Transverse colon (tissue), 4 donors: ENCODE measurements at regions of chr19 and their contacts with region 1.

Region 1: GRCh38 chr19:49817964-49818648 is at the start of gene MED25:
- DNase-seq: peak; percentile 87
- H3K4me3 ChIP-seq: peak within 1 kb of the TSS; percentile 62 to 94 (median 78)
- H3K27ac ChIP-seq: peak within 1 kb of the TSS; percentile 85 to 97 (median 93)
- H3K4me1 ChIP-seq: peaks cover 12 to 30% (median 14%) of the 10 kb centered on the region in 4 donors
- H3K27me3 ChIP-seq: no peaks in the 10 kb centered on the region
- CTCF ChIP-seq: peak; percentile 24 to 85 (median 54)
- EP300 ChIP-seq: no peak
- POLR2A ChIP-seq: peak; percentile 78
- total RNA-seq, gene MED25: 26.9 to 46.6 (median 38.7) TPM

Region 2: DNA sequence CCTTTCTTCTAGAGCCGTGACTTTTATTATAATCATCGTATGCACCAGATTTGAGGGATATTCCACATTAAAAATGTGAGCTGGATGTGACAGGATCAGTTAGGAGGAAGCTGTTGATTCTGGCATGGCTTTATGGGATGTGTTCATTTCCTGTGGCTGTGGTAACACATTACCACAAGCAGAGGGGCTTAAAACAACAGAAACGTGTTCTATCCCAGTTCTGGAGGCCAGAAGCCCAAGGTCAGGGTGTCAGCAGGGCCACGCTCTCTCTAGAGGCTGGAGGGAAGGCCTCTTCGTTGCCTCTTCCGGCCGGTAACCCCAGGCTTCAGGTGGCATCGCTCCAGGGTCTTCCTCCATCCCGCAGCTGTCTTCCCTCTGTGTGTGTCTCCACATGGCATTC is 14.4 kb after region 1 on chr19:
- in situ Hi-C with region 1: no loop called
- intact Hi-C with region 1: no loop called
- DNase-seq: no peak
- H3K4me3 ChIP-seq: no peak overlapping the region
- H3K27ac ChIP-seq: no peak overlapping the region
- H3K4me1 ChIP-seq: no peaks in the 10 kb centered on the region
- H3K27me3 ChIP-seq: no peaks in the 10 kb centered on the region
- CTCF ChIP-seq: no peak
- EP300 ChIP-seq: no peak
- POLR2A ChIP-seq: no peak

Region 3: DNA sequence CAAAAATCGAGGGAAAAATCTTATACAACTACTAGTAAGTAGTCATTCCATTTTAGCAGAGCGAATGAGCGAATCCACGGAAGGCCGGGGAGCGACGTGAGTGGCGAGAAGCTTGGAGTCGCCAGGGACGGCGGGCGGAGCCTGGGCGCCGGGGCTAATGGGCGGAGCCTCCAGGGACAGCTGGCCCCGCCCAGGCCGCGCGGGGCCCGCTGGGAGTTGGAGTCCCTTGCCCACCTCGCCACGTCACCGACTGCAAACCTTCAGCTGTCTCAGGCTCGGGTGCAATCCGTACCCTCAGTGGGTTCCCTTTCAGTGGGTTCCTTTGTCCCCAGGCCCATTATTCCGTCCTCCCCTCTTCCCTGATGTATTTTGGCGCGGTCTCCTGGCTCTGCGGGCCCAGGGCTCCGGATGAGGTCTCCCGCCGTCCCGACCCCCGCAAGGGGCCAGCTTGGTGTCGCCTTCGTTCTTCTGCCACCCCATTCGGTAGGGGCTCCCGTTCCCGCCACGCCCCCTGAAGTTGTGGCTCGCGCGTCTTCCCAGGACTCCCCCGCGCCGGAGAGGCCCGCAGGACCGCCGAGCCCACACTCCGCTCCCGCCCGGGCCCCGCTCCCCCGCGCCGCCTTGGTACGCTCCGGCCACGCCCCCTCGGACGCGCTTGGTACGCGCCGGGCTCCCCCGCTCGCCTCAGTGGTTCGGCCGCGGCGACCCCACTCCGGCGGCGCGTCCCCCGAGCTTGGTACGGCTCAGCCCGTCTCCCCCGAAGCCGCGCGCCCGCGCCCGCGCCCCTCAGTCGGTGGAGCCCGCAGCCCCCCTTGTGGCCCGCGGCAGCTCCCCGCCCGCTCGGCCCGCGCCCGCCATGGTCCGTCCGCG is 32.6 kb after region 1 on chr19 and contains the start of gene PTOV1:
- in situ Hi-C with region 1: no loop called
- intact Hi-C with region 1: loop called (anchors 5 kb)
- DNase-seq: peak; percentile 94
- H3K4me3 ChIP-seq: peak within 1 kb of the TSS; percentile 62 to 98 (median 87)
- H3K27ac ChIP-seq: peak within 1 kb of the TSS; percentile 97 to 100 (median 99)
- H3K4me1 ChIP-seq: peaks cover 15 to 30% (median 22%) of the 10 kb centered on the region in 4 donors
- H3K27me3 ChIP-seq: no peaks in the 10 kb centered on the region
- CTCF ChIP-seq: no peak
- EP300 ChIP-seq: no peak
- POLR2A ChIP-seq: peak; percentile 82
- total RNA-seq, gene PTOV1: 62.3 to 203 (median 66.8) TPM

Region 4: GRCh38 chr19:49869441-49870176 is 51.5 kb after region 1 on chr19:
- in situ Hi-C with region 1: loop called in 1 of 4 experiments (anchors 10 kb)
- intact Hi-C with region 1: no loop called
- DNase-seq: peak; percentile 97
- H3K4me3 ChIP-seq: peak overlapping the region; percentile 33 to 62 (median 53)
- H3K27ac ChIP-seq: peak overlapping the region; percentile 90 to 96 (median 94)
- H3K4me1 ChIP-seq: peaks cover 25 to 50% (median 43%) of the 10 kb centered on the region in 4 donors
- H3K27me3 ChIP-seq: no peaks in the 10 kb centered on the region
- CTCF ChIP-seq: peak in 1 of 5 experiments; percentile 45
- EP300 ChIP-seq: no peak
- POLR2A ChIP-seq: peak; percentile 79

Region 5: GRCh38 chr19:49954933-49955332 is 136.8 kb after region 1 on chr19:
- in situ Hi-C with region 1: no loop called
- intact Hi-C with region 1: no loop called
- DNase-seq: no peak
- H3K4me3 ChIP-seq: no peak overlapping the region
- H3K27ac ChIP-seq: peak overlapping the region in 3 of 4 donors; percentile 9 to 70 (median 25)
- H3K4me1 ChIP-seq: peaks cover 3 to 66% (median 30%) of the 10 kb centered on the region in 4 donors
- H3K27me3 ChIP-seq: peaks cover 12% of the 10 kb centered on the region
- CTCF ChIP-seq: no peak
- EP300 ChIP-seq: no peak
- POLR2A ChIP-seq: no peak